OCI-LY7 (cell line): ENCODE measurements at regions of chr6 and their contacts with region 1.

Region 1: DNA sequence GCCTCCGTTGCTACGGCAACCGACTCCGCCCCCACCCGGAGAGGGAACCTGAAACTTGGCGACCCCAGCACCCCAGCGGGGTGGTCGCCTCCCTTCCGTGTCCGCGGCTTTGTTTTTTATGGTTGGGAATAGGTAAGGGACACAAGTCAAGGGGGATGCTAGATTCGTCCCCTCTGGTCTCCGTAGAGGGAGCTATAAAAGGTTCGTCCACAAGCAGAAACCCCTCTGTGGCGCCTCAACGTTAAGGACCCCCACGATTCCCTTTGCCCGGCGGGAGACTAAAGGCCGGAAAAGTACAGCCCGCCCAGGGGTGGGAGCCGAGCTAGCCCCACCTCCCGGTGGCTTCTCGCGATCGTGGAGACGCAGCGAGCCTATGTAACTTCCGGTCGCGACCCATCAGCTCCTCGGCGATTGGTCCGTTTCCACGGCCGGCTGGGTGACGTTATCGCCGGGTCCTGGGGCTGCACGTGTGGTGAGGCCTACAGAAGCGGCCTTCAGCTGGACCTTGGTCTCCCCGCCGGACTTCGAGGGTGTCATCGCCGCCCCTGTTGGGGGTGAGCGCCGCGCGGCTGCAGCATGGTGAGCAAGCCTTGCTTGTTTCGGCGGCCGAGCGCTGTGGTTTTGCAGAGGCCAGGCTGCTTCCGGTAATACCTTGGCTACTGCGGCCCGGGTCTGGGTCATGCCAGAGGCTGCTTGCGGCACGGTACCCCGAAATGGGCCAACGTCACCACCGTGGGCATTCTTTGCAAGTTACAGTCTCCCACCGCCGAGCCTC is at the start of gene LTV1:
- DNase-seq: peak; percentile 96
- H3K4me3 ChIP-seq: peak within 1 kb of the TSS; percentile 98
- H3K27ac ChIP-seq: peak within 1 kb of the TSS; percentile 58
- H3K4me1 ChIP-seq: peaks cover 13% of the 10 kb centered on the region
- CTCF ChIP-seq: no peak
- total RNA-seq, gene LTV1: 25.6 and 26.8 TPM in 2 replicates

Region 2: DNA sequence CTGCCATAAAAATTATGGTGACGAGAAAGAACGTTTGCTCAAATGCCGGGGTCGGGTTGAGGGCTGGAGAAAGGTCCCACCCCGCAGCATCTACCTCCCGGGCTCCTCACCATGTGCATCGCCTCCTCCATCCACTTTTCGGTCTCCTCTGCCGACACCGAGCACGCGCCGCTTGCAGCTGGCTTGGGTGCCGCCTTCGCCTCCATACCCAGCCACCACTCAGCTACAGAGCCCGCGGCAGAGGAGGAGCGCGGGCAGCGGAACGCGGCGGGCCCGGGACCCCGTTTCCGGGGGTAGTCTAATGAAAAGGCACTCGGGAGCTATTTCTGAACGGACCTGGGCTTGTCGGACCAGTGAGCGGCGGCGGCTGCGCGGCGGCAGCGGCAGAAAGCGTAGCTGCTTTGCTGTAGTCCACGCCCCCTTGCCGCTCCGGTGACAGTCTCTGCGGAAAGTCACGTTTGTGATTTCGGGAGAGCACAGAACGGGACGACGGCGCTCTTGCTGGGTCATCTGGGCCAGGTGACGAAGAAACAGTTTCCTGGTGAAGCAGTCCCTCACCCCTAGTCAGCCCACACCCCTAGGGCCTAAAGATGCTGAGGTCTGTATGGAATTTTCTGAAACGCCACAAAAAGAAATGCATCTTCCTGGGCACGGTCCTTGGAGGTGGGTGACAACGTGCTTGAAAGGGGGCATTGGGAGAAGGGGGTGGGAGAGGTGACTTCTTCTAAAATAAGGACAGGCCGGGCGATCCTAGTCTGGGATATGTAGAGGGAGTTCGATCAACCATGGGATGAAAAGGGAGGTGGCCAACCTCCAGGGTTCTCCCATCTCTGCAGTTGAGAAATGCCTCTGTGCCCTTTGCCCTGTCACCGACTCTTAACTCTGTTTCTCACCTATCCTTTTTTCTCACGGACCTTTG is 392.4 kb before region 1 on chr6 and contains the starts of genes ADAT2 and PEX3:
- CTCF ChIA-PET with region 1: no interaction called
- POLR2A ChIA-PET with region 1: interaction called, 9 read pairs
- intact Hi-C with region 1: loop called (anchors 5 kb)
- DNase-seq: peak; percentile 95
- H3K4me3 ChIP-seq: peak within 1 kb of the TSS; percentile 94
- H3K27ac ChIP-seq: peak within 1 kb of the TSS; percentile 72
- H3K4me1 ChIP-seq: peaks cover 36% of the 10 kb centered on the region
- CTCF ChIP-seq: no peak
- total RNA-seq, gene ADAT2: 17.6 and 21.7 TPM in 2 replicates
- total RNA-seq, gene PEX3: 10.9 and 14.8 TPM in 2 replicates

Region 3: DNA sequence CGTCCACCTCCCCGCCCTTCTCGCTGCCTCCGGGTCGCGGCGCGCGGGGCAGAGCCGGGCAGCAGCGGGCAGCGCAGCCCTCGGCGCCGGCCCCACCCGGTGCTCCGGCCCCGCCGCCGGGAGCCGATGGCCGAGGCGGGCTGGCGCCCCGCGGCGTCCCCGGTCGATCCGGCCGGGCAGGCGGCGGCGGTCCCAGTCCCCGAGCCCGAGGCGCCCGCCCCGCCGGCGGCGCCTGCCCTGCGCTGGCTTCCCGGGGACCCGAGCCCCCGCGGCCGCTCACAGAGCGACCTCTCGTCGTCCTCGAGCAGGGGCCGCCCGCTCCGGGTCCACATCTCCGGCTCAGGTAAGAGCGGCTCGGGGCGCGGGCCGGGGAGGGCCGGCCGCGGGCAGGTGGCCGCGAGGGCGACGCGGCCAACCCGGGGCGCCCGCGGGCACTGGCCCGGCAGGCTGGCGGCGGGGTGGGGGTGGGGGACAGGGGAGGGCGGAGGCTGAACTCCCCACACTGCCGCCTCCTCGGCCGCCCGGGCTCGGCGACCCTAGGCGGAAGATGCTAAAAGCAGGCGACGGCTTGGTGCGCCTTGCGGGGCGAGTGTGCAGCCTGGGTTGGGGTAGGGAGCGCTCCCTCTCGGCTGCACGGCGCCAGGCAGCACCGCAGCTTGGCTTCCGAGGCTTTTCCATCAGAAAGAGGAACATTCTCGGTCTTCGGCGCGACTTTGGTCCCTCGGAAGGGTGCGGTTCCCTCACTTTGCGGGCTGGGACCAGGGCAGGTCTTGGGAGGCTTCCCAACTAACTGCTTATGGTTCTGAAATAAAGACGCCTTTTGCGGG is 306.0 kb before region 1 on chr6:
- CTCF ChIA-PET with region 1: no interaction called
- POLR2A ChIA-PET with region 1: no interaction called
- intact Hi-C with region 1: loop called (anchors 5 kb)
- DNase-seq: no peak
- H3K4me3 ChIP-seq: peak overlapping the region; percentile 47
- H3K27ac ChIP-seq: no peak overlapping the region
- H3K4me1 ChIP-seq: no peaks in the 10 kb centered on the region
- CTCF ChIP-seq: no peak

Region 4: DNA sequence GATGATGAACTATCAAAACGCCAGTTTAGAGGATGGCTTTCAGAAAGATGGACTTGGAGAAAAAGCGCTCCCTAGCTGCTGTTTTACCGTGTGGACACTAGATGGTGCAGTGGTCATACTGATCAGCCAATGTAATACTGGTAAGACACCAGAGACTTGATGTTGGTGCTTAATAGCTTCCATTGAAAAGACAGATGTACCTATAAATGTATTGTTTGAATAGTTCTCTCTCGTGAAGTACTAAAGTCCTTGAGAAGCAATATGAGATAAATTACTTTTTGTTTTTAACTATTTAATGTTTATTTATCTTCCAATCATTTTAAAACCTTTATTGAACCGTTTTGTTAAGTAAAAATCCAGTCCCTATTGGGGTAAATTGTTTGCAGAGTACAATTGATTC is 267.6 kb before region 1 on chr6:
- CTCF ChIA-PET with region 1: no interaction called
- POLR2A ChIA-PET with region 1: no interaction called
- intact Hi-C with region 1: loop called (anchors 5 kb)
- DNase-seq: peak; percentile 69
- H3K4me3 ChIP-seq: no peak overlapping the region
- H3K27ac ChIP-seq: no peak overlapping the region
- H3K4me1 ChIP-seq: no peaks in the 10 kb centered on the region
- CTCF ChIP-seq: peak; percentile 93

Region 5: DNA sequence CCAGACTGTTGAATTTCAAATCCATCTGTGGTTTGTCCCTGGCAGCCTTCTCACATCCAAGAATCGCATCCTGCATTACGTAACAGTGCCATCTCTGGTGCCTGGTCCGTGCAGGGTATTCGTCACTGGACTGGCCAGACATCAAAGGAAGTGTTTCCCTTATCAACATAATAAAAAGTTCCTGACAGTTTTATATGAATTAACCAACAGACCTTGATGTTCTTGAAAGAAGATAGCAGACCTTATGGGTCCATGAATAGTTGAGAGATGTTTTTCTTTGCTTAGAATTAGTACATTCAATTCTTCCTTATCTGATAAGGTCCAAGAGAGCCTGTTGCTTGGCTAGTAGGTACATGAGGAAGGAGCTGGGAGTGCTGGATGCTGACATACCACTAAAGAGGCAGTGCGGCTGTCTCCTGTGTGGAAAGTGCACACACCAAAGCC is 87.8 kb before region 1 on chr6:
- CTCF ChIA-PET with region 1: no interaction called
- POLR2A ChIA-PET with region 1: no interaction called
- intact Hi-C with region 1: no loop called
- DNase-seq: no peak
- H3K4me3 ChIP-seq: no peak overlapping the region
- H3K27ac ChIP-seq: no peak overlapping the region
- H3K4me1 ChIP-seq: no peaks in the 10 kb centered on the region
- CTCF ChIP-seq: no peak

Region 6: GRCh38 chr6:143863771-143864170 is 20.7 kb after region 1 on chr6:
- CTCF ChIA-PET with region 1: no interaction called
- POLR2A ChIA-PET with region 1: interaction called, 10 read pairs
- intact Hi-C with region 1: no loop called
- DNase-seq: no peak
- H3K4me3 ChIP-seq: no peak overlapping the region
- H3K27ac ChIP-seq: no peak overlapping the region
- H3K4me1 ChIP-seq: no peaks in the 10 kb centered on the region
- CTCF ChIP-seq: no peak

Region 7: GRCh38 chr6:144063744-144064401 is 220.8 kb after region 1 on chr6:
- CTCF ChIA-PET with region 1: no interaction called
- POLR2A ChIA-PET with region 1: interaction called, 5 read pairs
- intact Hi-C with region 1: loop called (anchors 10 kb)
- DNase-seq: peak; percentile 89
- H3K4me3 ChIP-seq: peak overlapping the region; percentile 82
- H3K27ac ChIP-seq: peak overlapping the region; percentile 29
- H3K4me1 ChIP-seq: peaks cover 24% of the 10 kb centered on the region
- CTCF ChIP-seq: peak; percentile 60